ENCODE measurements at regions of chr9 and their contacts with region 1.

Region 1: DNA sequence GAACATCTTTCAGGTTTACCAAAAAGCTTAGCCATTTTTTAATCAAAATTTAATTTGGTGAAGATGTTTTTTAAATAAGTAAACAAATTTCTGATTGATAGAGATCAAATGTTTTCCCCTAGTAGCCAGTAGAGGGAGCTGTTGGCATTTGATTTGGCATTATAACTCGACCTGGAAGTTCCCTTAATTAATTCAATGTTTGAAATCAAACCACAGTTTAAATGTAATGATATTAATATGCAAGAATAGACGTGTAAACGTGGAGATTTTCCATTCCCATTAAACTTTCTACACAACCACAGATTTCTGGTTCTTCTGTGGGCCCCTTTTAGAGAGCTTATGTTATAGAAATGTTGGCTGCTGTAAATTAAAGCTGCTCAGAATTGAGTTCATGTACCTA is 148.1 kb upstream of the MPDZ start:
- DNase-seq: peak in 1 of 2 donors; percentile 16
- ATAC-seq: peak; percentile 51 to 73
- H3K4me3 ChIP-seq: peak overlapping the region in 1 of 4 donors; percentile 14
- H3K27ac ChIP-seq: peak overlapping the region; percentile 3 to 57 (median 19)
- H3K4me1 ChIP-seq: peaks cover 19 to 25% of the 10 kb centered on the region in 2 donors
- H3K27me3 ChIP-seq: no peaks in the 10 kb centered on the region
- CTCF ChIP-seq: peak; percentile 72 to 87 (median 79)
- POLR2A ChIP-seq: no peak

Region 2: DNA sequence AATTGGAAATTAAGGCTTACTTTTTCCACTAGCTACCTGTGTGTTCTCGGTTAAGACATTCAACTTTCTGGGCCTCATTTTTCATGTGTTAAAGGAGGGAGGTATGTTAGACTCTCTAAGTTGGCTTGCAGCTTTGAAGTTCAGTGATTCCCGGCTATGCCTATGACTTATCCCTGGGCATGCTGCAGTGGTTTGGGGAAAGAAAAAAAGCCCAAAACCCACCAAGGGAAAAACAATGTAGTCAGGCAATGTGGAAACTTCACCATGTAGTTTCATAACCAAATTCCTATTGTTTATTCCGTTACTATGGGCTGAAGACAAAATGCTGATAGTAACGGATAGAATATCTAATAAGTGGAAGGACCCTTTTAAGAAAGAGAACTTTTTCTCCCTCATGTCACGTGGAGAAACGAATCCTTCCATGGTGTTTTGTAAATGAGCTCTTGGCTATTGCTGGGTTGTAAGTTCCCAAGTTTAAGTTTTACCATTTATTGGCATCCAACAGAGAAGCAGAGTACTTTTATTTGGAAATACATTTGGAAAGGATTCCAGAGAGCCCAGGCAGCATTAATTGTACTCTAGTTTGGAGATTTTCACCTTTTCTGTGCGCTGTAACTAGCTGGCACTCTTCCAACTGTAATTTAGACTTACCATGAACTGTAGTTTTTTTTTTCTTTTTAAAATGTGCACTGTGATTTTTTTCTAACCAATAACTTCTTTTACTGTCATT is 63.2 kb before region 1 on chr9:
- in situ Hi-C with region 1: loop called in 1 of 4 experiments (anchors 10 kb)
- intact Hi-C with region 1: no loop called
- DNase-seq: no peak
- ATAC-seq: no peak
- H3K4me3 ChIP-seq: no peak overlapping the region
- H3K27ac ChIP-seq: no peak overlapping the region
- H3K4me1 ChIP-seq: peaks cover 0 to 3% of the 10 kb centered on the region in 2 donors
- H3K27me3 ChIP-seq: no peaks in the 10 kb centered on the region
- CTCF ChIP-seq: no peak
- POLR2A ChIP-seq: no peak

Region 3: GRCh38 chr9:14096258-14096922 is 668.8 kb after region 1 on chr9:
- in situ Hi-C with region 1: loop called in 1 of 4 experiments (anchors 25 kb)
- intact Hi-C with region 1: loop called (anchors 10 kb)
- DNase-seq: no peak
- ATAC-seq: peak; percentile 39 to 68
- H3K4me3 ChIP-seq: peak overlapping the region; percentile 14 to 27 (median 18)
- H3K27ac ChIP-seq: peak overlapping the region; percentile 39 to 69 (median 64)
- H3K4me1 ChIP-seq: peaks cover 20 to 31% of the 10 kb centered on the region in 2 donors
- H3K27me3 ChIP-seq: no peaks in the 10 kb centered on the region
- CTCF ChIP-seq: no peak
- POLR2A ChIP-seq: no peak

Region 4: GRCh38 chr9:14358523-14358922 is 930.9 kb after region 1 on chr9:
- in situ Hi-C with region 1: loop called (anchors 5 to 10 kb)
- intact Hi-C with region 1: loop called (anchors 1 kb)
- DNase-seq: no peak
- ATAC-seq: no peak
- H3K4me3 ChIP-seq: no peak overlapping the region
- H3K27ac ChIP-seq: no peak overlapping the region
- H3K4me1 ChIP-seq: peaks cover 0 to 3% of the 10 kb centered on the region in 2 donors
- H3K27me3 ChIP-seq: no peaks in the 10 kb centered on the region
- CTCF ChIP-seq: no peak
- POLR2A ChIP-seq: no peak

Region 5: DNA sequence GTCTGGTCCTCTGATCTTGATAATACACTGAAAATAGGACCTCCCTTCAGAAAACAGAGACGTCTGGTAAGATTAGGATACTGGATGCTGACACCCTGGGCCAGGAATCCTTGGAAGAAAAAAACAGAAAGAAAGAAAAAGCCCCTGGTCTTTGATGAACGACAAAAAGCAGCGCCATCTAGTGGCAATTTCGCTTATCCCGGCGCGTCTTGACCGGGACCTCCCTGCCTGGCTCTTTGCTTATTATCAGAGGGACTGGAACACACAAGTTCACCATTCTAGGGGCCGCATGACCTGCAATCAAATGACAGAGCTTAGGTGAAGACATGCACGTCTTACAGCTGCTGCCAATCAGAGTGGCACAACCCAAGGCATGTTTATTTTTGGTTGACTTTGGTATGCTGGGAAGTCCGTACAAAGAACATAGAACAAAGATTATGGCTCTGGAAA is 1001.2 kb after region 1 on chr9:
- in situ Hi-C with region 1: no loop called
- intact Hi-C with region 1: loop called (anchors 2 kb)
- DNase-seq: peak; percentile 19 to 44
- ATAC-seq: peak; percentile 42 to 82
- H3K4me3 ChIP-seq: no peak overlapping the region
- H3K27ac ChIP-seq: no peak overlapping the region
- H3K4me1 ChIP-seq: peaks cover 5 to 10% of the 10 kb centered on the region in 2 donors
- H3K27me3 ChIP-seq: no peaks in the 10 kb centered on the region
- CTCF ChIP-seq: peak; percentile 45 to 85 (median 59)
- POLR2A ChIP-seq: no peak